H1 (cell line): ENCODE measurements at regions of chr15 and their contacts with region 1.

Region 1: GRCh38 chr15:91032919-91033803 is 10.8 kb upstream of the VPS33B start:
- DNase-seq: peak; percentile 82 to 94
- H3K4me3 ChIP-seq: 0 out of 8 replicates have a peak overlapping the region, but pooled peaks of 1 of the 4 experiments have one; percentile 7
- H3K27ac ChIP-seq: no peak overlapping the region
- H3K4me1 ChIP-seq: peaks cover 0 to 3% (median 1%) of the 10 kb centered on the region in 4 experiments; a peak in 3 of 7 replicates
- H3K27me3 ChIP-seq: no peaks in the 10 kb centered on the region; a peak in 1 of 7 replicates
- CTCF ChIP-seq: peak; percentile 75 to 88 (median 87)
- EP300 ChIP-seq: no peak
- POLR2A ChIP-seq: no peak
- RAD21 ChIP-seq: peak; percentile 65 to 74

Region 2: GRCh38 chr15:90851114-90851513 is 182.0 kb before region 1 on chr15:
- CTCF ChIA-PET with region 1: no interaction called
- POLR2A ChIA-PET with region 1: no interaction called
- DNase-seq: no peak
- H3K4me3 ChIP-seq: no peak overlapping the region
- H3K27ac ChIP-seq: no peak overlapping the region
- H3K4me1 ChIP-seq: no peaks in the 10 kb centered on the region
- H3K27me3 ChIP-seq: no peaks in the 10 kb centered on the region
- CTCF ChIP-seq: no peak
- EP300 ChIP-seq: no peak
- POLR2A ChIP-seq: no peak
- RAD21 ChIP-seq: no peak

Region 3: DNA sequence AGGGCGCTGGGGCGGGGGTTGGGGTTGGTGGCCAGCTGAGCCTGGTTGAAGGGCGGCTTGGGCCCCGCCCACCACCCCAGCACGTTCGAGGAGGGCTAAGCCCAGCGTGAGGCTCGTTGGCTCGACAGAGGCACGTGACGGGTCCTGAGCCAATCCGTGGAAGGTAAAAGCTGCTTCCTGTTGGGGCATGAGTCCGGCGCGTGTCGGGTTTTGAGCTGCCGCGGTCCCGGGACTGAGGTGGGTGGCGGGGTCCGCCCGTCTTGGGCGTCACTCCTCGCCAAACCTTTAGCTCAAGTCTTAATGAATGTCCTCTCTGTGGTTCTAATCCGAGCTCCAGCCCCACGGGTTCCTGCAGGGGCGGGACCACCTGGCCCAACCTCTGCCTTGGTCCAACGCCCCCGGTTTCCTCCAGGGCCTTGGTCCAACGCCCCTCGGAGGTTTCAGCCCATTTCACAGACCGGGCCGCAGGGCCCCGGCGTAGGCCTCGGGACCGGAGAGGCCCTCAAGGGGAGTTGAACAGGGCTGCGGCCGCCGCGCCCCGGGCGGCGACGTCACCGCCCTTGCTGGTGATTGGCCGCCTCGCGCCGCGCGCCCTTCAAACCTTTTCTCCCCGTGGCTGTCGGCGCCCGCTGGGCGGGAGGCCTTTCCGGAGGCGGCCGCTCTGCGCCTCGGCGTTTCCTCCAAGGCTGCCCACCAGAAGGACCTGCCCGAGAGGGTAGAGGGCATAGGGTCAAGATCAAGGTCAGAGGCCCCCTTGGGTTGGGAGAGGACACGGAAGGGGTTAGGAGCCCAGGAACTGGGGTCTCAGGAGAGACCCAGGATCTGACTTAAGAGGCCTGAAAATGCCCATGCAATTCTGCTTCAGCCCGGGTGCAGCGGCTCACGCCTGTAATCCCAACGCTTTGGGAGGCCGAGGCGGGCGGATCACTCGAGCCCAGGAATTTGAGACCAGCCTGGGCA is 78.2 kb before region 1 on chr15 and contains the start of gene RCCD1:
- CTCF ChIA-PET with region 1: interaction called, 47 read pairs
- POLR2A ChIA-PET with region 1: interaction called, 11 read pairs
- DNase-seq: peak; percentile 85 to 92
- H3K4me3 ChIP-seq: peak within 1 kb of the TSS; percentile 46 to 72 (median 58)
- H3K27ac ChIP-seq: peak within 1 kb of the TSS; percentile 92
- H3K4me1 ChIP-seq: peaks cover 0 to 15% (median 8%) of the 10 kb centered on the region in 4 experiments; a peak in 6 of 7 replicates
- H3K27me3 ChIP-seq: no peaks in the 10 kb centered on the region
- CTCF ChIP-seq: no peak
- EP300 ChIP-seq: no peak
- POLR2A ChIP-seq: peak; percentile 79 to 95
- RAD21 ChIP-seq: no peak
- total RNA-seq, gene RCCD1: 16.2 and 18.8 TPM in 2 replicates

Region 4: DNA sequence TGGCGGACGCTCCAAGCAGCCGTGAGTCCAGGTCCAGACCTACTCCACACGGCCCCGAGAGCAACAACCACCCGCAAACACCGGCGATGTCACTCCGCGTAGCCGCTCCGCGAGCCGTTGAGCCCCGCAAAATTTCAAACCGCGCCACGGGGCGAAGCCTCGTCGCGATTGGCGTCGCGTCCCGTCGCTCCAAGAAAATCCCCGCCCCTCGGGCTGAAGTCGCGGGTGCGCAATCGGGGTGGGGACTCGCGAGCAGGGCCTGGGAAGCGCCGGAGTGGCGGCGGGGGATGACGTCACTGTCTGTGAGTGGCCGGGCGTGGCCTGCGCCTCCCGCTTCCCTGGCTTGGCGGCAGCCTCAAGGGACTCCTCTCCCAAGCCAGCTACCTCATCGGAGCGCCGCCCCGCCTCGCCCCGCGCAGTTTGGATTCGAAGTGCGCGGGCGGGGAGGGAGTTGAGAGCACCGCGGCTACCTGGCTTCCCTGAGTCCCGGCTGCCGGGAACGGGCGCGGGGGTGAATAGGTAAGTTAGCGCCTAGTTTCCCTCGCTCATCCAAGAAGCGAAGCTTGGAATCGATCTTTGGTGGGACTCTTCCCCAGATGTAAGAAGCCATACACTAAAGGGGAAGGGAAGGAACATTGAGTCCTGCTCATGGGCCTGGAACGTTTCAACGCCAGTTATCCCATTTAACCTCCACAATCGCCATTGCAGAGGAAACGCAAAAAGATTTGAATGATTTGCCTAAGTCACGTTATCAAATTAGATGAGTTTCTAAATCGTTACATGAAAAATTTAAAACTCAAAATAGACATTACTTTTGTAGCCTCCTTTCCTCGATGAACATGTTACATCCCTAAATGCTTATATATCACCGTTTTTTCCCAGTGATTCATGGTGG is 38.5 kb before region 1 on chr15 and contains the start of gene PRC1:
- CTCF ChIA-PET with region 1: interaction called, 13 read pairs
- POLR2A ChIA-PET with region 1: no interaction called
- DNase-seq: peak; percentile 97 to 98
- H3K4me3 ChIP-seq: peak within 1 kb of the TSS; percentile 78 to 87 (median 86)
- H3K27ac ChIP-seq: peak within 1 kb of the TSS; percentile 80
- H3K4me1 ChIP-seq: peaks cover 0 to 5% (median 0%) of the 10 kb centered on the region in 4 experiments; a peak in 1 of 7 replicates
- H3K27me3 ChIP-seq: no peaks in the 10 kb centered on the region
- CTCF ChIP-seq: no peak
- EP300 ChIP-seq: peak in 1 of 2 experiments; percentile 20; a peak in 1 of 3 replicates
- POLR2A ChIP-seq: peak; percentile 90 to 95
- RAD21 ChIP-seq: no peak
- total RNA-seq, gene PRC1: 90.7 and 91.4 TPM in 2 replicates

Region 5: DNA sequence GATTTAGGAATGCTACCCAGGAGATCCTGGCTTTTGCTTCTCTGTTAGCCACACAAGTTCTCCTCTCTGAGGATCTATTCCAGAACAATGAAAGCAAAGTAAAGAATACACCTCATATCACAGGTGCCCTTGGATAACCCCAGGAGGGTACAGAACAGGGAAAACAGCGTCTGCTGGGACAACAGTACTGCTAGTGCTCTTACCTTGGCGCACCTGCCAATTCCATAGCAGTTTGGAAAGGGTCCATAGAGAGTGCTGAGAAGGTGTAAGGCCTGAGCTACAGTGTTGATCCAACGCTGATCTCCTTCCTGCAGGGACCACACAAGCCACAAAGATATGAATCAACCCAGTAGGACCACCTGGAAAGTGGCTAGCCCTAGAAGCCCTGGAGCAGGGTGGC is 25.9 kb before region 1 on chr15:
- CTCF ChIA-PET with region 1: interaction called, 22 read pairs
- POLR2A ChIA-PET with region 1: no interaction called
- DNase-seq: no peak
- H3K4me3 ChIP-seq: no peak overlapping the region
- H3K27ac ChIP-seq: no peak overlapping the region
- H3K4me1 ChIP-seq: no peaks in the 10 kb centered on the region
- H3K27me3 ChIP-seq: no peaks in the 10 kb centered on the region
- CTCF ChIP-seq: no peak
- EP300 ChIP-seq: no peak
- POLR2A ChIP-seq: no peak
- RAD21 ChIP-seq: no peak

Region 6: GRCh38 chr15:91022075-91022835 is 10.9 kb before region 1 on chr15 and contains the start of gene VPS33B:
- CTCF ChIA-PET with region 1: interaction called, 16 read pairs
- POLR2A ChIA-PET with region 1: interaction called, 7 read pairs
- DNase-seq: peak; percentile 68 to 86
- H3K4me3 ChIP-seq: peak within 1 kb of the TSS; percentile 74 to 99 (median 91)
- H3K27ac ChIP-seq: peak within 1 kb of the TSS; percentile 37; the same call in 1 of the 2 replicates
- H3K4me1 ChIP-seq: peaks cover 0 to 3% (median 1%) of the 10 kb centered on the region in 4 experiments; a peak in 3 of 7 replicates
- H3K27me3 ChIP-seq: no peaks in the 10 kb centered on the region
- CTCF ChIP-seq: no peak
- EP300 ChIP-seq: no peak
- POLR2A ChIP-seq: peak in 1 of 2 experiments; percentile 67; a peak in 1 of 3 replicates
- RAD21 ChIP-seq: no peak
- total RNA-seq, gene VPS33B: 17.3 and 18.3 TPM in 2 replicates

Region 7: DNA sequence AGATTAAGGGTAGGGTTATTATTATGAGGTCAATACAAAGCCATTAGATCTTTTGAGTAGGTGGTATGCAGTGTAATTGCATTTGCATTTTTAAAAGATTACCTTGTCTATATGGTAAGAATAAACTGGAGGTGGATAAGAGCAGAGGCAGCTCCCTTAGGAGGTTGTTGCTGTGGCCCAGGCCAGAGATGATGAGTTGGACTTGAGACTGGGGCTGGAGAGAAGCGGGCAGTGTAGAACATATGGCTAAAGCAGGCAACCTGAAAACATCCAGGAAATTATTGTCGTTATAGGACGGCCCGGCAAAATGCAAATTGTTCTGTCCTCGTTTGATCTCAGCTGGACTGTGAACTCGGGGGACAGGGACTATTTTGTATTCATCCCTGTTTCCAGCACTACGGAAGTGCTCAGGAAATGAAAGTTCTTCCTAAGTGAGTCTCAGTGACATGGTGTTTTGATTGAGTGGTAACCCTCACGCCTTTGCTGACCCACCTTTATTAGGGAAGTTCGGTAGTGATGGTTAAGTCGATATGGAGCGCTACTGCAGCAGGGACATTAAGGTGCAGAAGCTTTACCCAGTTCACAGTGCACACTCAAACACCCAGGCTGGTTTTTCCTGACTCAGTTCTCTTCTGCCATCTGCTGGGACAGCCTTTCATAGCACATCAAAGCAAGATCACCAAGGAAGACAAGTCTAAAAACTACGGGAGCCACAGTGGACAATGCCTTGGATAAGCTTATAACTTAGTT is 16.4 kb after region 1 on chr15:
- CTCF ChIA-PET with region 1: interaction called, 26 read pairs
- POLR2A ChIA-PET with region 1: interaction called, 4 read pairs
- DNase-seq: no peak
- H3K4me3 ChIP-seq: no peak overlapping the region
- H3K27ac ChIP-seq: no peak overlapping the region
- H3K4me1 ChIP-seq: no peaks in the 10 kb centered on the region
- H3K27me3 ChIP-seq: no peaks in the 10 kb centered on the region
- CTCF ChIP-seq: peak; percentile 29 to 76 (median 67)
- EP300 ChIP-seq: no peak
- POLR2A ChIP-seq: no peak
- RAD21 ChIP-seq: peak; percentile 77 to 80